T-cell (primary cell): ENCODE measurements at regions of chr16 and their contacts with region 1.

Region 1: GRCh38 chr16:75110637-75111513 is 5.7 kb downstream of the LDHD start:
- DNase-seq: peak; percentile 51 to 89 (median 74)
- ATAC-seq: peak; percentile 76 to 85 (median 80)
- H3K4me3 ChIP-seq: peak overlapping the region in 1 of 2 donors; percentile 25
- H3K4me3 Mint-ChIP-seq: peak overlapping the region; percentile 26 to 60 (median 41)
- H3K27ac ChIP-seq: peak overlapping the region; percentile 26
- H3K27ac Mint-ChIP-seq: peak overlapping the region; percentile 83 to 89
- H3K4me1 ChIP-seq: peaks cover 22 to 52% of the 10 kb centered on the region in 2 experiments
- H3K4me1 Mint-ChIP-seq: peaks cover 33 to 47% (median 40%) of the 10 kb centered on the region in 3 donors
- H3K27me3 ChIP-seq: peaks cover 0 to 34% of the 10 kb centered on the region in 2 experiments
- H3K27me3 Mint-ChIP-seq: peaks cover 4 to 13% of the 10 kb centered on the region in 2 donors

Region 2: DNA sequence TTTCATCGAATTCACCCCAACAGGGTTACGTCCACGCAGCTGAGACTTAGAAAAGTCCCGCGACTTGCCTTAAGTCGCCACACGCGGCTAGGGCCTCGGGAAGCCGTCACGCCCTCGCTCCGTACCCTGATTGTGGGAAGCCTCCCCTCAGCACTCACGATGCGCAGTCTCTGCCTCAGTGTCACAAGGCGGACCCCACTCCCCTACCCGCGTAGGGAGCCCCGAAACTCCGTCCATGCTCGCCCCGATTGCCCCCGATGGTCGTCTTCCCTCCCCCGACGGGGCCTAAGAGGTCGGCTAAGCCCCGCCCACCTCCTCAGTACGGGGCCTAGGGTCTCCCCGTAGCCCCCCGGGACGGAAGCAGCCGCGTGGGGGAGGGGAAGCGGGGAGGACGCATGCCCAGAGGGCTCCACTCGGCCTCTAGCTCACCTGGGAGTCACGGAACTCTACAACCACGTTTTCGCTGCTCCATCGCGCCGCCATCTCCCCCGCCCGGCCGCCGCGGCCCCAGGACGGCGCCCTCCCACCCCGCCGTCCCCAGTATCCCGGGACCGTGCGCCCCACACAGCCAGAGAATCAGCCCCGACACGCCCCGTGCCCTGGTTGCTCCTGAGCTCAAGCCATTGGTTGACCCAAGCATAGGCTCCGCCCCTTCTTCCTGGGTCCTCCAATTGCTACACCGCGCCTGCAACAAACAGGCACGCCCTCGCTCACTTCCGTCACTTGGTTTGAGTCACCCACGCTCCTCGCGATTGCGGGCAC is 126.2 kb before region 1 on chr16 and contains the start of gene WDR59:
- CTCF ChIA-PET with region 1: interaction called, 5 to 18 read pairs
- POLR2A ChIA-PET with region 1: interaction called in 1 of 2 experiments, 6 read pairs
- DNase-seq: peak; percentile 91 to 100 (median 99)
- ATAC-seq: peak; percentile 97 to 99 (median 99)
- H3K4me3 ChIP-seq: peak within 1 kb of the TSS; percentile 97 to 99
- H3K4me3 Mint-ChIP-seq: peak within 1 kb of the TSS; percentile 81 to 97 (median 89)
- H3K27ac ChIP-seq: peak within 1 kb of the TSS; percentile 71
- H3K27ac Mint-ChIP-seq: peak within 1 kb of the TSS; percentile 76 to 91
- H3K4me1 ChIP-seq: peaks cover 7 to 26% of the 10 kb centered on the region in 2 experiments
- H3K4me1 Mint-ChIP-seq: peaks cover 13 to 25% (median 21%) of the 10 kb centered on the region in 3 donors
- H3K27me3 ChIP-seq: peaks cover 0 to 3% of the 10 kb centered on the region in 2 experiments
- H3K27me3 Mint-ChIP-seq: no peaks in the 10 kb centered on the region
- total RNA-seq, gene WDR59: 97.7 to 120 (median 108) TPM

Region 3: GRCh38 chr16:74998481-74999218 is 112.2 kb before region 1 on chr16 and contains the start of gene ZNRF1:
- CTCF ChIA-PET with region 1: interaction called, 12 to 35 read pairs
- POLR2A ChIA-PET with region 1: interaction called in 1 of 2 experiments, 3 read pairs
- DNase-seq: peak; percentile 48 to 87 (median 70)
- ATAC-seq: peak; percentile 83 to 92 (median 86)
- H3K4me3 ChIP-seq: peak within 1 kb of the TSS; percentile 60 to 62
- H3K4me3 Mint-ChIP-seq: peak within 1 kb of the TSS; percentile 80 to 86 (median 81)
- H3K27ac ChIP-seq: peak within 1 kb of the TSS; percentile 47
- H3K27ac Mint-ChIP-seq: peak within 1 kb of the TSS; percentile 45 to 71
- H3K4me1 ChIP-seq: peaks cover 6 to 23% of the 10 kb centered on the region in 2 experiments
- H3K4me1 Mint-ChIP-seq: peaks cover 12 to 20% (median 17%) of the 10 kb centered on the region in 3 donors
- H3K27me3 ChIP-seq: peaks cover 0 to 10% of the 10 kb centered on the region in 2 experiments
- H3K27me3 Mint-ChIP-seq: peaks cover 3 to 5% of the 10 kb centered on the region in 2 donors
- total RNA-seq, gene ZNRF1: 5.5 to 7.8 (median 7.5) TPM

Region 4: GRCh38 chr16:75074920-75075687 is 35.8 kb before region 1 on chr16:
- CTCF ChIA-PET with region 1: interaction called in 1 of 2 experiments, 27 read pairs
- POLR2A ChIA-PET with region 1: no interaction called
- DNase-seq: peak; percentile 65 to 90 (median 82)
- ATAC-seq: peak; percentile 99 to 100 (median 99)
- H3K4me3 ChIP-seq: peak overlapping the region; percentile 10 to 17
- H3K4me3 Mint-ChIP-seq: peak overlapping the region; percentile 32 to 66 (median 55)
- H3K27ac ChIP-seq: peak overlapping the region; percentile 62
- H3K27ac Mint-ChIP-seq: peak overlapping the region; percentile 87 to 89
- H3K4me1 ChIP-seq: peaks cover 40 to 50% of the 10 kb centered on the region in 2 experiments
- H3K4me1 Mint-ChIP-seq: peaks cover 60 to 68% (median 66%) of the 10 kb centered on the region in 3 donors
- H3K27me3 ChIP-seq: no peaks in the 10 kb centered on the region
- H3K27me3 Mint-ChIP-seq: no peaks in the 10 kb centered on the region

Region 5: DNA sequence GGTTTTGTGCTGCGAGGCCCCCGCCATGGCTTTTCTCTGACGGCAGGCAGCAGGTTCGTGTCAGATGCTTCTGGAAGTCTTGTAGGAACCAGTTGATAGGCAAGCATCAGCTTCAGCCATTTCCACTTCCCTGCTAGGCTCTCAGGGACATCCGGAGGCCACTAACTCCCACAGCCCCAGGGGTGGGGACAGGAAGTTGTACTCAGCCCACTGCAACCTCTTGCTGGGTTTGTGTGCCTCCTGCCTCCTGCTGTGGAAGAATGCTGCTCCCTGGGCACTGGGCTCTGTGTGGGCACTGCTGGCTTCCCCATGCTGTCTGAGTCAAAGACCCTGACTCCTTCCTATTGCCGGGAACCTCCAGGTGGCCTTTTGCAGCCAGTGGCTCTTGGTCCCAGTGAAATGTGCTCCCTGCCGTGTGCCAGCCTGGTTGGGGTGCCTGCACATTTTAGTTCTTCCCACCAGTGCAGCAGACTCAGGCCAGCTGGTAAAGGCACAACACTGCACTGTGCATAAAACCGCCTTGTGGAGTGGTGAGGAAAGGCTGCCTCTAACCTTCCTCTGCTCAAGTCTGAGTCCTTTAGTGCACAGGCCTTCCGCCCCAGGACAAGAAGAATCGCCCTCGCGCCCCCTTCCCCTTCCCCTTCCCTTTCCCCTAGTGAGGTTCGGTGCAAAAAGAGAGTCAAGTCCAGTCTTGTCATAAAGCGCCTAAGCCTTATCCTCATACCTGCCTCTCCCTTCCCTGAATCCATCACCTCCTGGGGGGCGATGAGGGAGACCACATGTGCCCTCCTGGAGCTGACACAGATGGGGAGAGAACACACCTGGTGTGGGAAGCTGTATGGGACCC is 10.9 kb before region 1 on chr16:
- CTCF ChIA-PET with region 1: interaction called, 5 to 12 read pairs
- POLR2A ChIA-PET with region 1: interaction called in 1 of 2 experiments, 4 read pairs
- DNase-seq: peak in 17 of 35 experiments; percentile 14 to 56 (median 26)
- ATAC-seq: peak; percentile 36 to 81 (median 70)
- H3K4me3 ChIP-seq: no peak overlapping the region
- H3K4me3 Mint-ChIP-seq: peak overlapping the region; percentile 6 to 39 (median 22)
- H3K27ac ChIP-seq: peak overlapping the region; percentile 69
- H3K27ac Mint-ChIP-seq: peak overlapping the region; percentile 88 to 92
- H3K4me1 ChIP-seq: peaks cover 16 to 41% of the 10 kb centered on the region in 2 experiments
- H3K4me1 Mint-ChIP-seq: peaks cover 29 to 54% (median 45%) of the 10 kb centered on the region in 3 donors
- H3K27me3 ChIP-seq: no peaks in the 10 kb centered on the region
- H3K27me3 Mint-ChIP-seq: no peaks in the 10 kb centered on the region